Mammary epithelial cell (primary cell): ENCODE measurements at regions of chr1 and their contacts with region 1.

Region 1: GRCh38 chr1:43206600-43207228 is 34.6 kb downstream of the CFAP57 start:
- DNase-seq: peak; percentile 86
- H3K4me3 ChIP-seq: no peak overlapping the region
- H3K27ac ChIP-seq: peak overlapping the region; percentile 87
- H3K4me1 ChIP-seq: peaks cover 28% of the 10 kb centered on the region
- H3K27me3 ChIP-seq: no peaks in the 10 kb centered on the region
- CTCF ChIP-seq: no peak

Region 2: DNA sequence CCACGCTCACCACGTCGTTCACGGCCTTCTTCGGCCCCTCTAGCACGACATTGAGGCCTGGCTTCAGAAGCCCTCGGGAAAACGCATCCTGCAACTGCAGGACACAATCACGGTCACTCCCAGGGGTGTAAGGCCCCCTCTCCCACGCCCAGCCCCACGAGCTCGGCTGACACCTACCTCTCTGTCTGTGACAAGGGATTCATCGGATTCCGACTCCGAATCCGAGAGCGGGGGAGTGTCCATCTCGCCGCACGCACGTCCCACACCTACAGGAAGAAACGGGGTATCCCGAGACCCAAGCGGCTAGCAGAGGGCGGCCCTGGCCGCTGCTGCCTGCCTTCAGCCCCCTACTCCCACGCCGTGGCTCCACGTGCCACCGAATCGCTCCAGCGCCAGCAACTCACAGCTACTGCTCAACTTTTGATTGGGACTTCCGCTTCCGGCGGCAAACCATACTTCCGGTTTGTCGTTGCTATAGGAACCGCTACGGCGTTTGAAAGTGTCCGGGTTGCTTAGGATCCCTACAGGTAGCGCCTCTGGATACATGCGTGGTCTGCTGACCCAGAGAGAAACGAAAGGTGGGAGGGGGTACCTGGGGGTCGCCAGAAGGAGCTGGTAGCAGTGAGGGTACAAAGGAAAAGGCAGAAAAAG is 34.7 kb before region 1 on chr1 and contains the starts of genes CFAP57 and EBNA1BP2:
- CTCF ChIA-PET with region 1: no interaction called
- dilution Hi-C with region 1: no loop called
- in situ Hi-C with region 1: no loop called
- intact Hi-C with region 1: loop called (anchors 1 kb)
- DNase-seq: peak; percentile 92
- H3K4me3 ChIP-seq: peak within 1 kb of the TSS; percentile 56 to 100 (median 94)
- H3K27ac ChIP-seq: peak within 1 kb of the TSS; percentile 55
- H3K4me1 ChIP-seq: peaks cover 11% of the 10 kb centered on the region
- H3K27me3 ChIP-seq: no peaks in the 10 kb centered on the region
- CTCF ChIP-seq: no peak
- total RNA-seq, gene CFAP57: 0.26 to 0.50 TPM
- total RNA-seq, gene EBNA1BP2: 56.5 to 115 TPM